IMR-90 (cell line): ENCODE measurements at regions of chr1 and their contacts with region 1.

Region 1: GRCh38 chr1:231431665-231432415 is 9.8 kb upstream of the EGLN1 start:
- DNase-seq: no peak
- ATAC-seq: no peak
- H3K4me3 ChIP-seq: no peak overlapping the region
- H3K27ac ChIP-seq: no peak overlapping the region
- H3K4me1 ChIP-seq: no peaks in the 10 kb centered on the region
- H3K27me3 ChIP-seq: no peaks in the 10 kb centered on the region
- CTCF ChIP-seq: no peak
- POLR2A ChIP-seq: no peak
- RAD21 ChIP-seq: no peak

Region 2: DNA sequence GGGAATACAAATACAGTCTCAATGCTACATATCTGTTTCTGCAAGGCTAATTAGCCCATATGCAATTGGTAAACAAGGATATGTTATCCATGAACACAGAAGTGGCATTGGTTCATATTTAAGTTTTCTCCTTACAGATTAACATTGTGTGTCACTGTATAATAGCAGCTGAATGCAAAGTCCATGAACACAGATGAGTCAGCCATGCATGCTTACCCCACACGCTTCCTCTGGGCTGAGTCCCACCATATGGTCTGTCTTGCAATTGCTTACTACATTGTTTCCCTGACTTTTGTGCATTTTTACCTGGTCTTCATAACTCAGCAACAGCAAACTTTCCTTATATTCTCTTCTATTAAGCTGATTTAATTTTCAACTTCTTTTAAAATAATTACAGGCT is 55.2 kb after region 1 on chr1:
- CTCF ChIA-PET with region 1: no interaction called
- POLR2A ChIA-PET with region 1: no interaction called
- dilution Hi-C with region 1: no loop called
- in situ Hi-C with region 1: no loop called
- intact Hi-C with region 1: loop called (anchors 10 kb)
- DNase-seq: peak; percentile 81
- ATAC-seq: peak; percentile 83
- H3K4me3 ChIP-seq: no peak overlapping the region
- H3K27ac ChIP-seq: no peak overlapping the region
- H3K4me1 ChIP-seq: peaks cover 2% of the 10 kb centered on the region; the same call in 1 of the 2 replicates
- H3K27me3 ChIP-seq: no peaks in the 10 kb centered on the region
- CTCF ChIP-seq: no peak
- POLR2A ChIP-seq: no peak
- RAD21 ChIP-seq: no peak